Naive thymus-derived CD4-positive, alpha-beta T cell (primary cell): ENCODE measurements at regions of chr6 and their contacts with region 1.

Region 1: DNA sequence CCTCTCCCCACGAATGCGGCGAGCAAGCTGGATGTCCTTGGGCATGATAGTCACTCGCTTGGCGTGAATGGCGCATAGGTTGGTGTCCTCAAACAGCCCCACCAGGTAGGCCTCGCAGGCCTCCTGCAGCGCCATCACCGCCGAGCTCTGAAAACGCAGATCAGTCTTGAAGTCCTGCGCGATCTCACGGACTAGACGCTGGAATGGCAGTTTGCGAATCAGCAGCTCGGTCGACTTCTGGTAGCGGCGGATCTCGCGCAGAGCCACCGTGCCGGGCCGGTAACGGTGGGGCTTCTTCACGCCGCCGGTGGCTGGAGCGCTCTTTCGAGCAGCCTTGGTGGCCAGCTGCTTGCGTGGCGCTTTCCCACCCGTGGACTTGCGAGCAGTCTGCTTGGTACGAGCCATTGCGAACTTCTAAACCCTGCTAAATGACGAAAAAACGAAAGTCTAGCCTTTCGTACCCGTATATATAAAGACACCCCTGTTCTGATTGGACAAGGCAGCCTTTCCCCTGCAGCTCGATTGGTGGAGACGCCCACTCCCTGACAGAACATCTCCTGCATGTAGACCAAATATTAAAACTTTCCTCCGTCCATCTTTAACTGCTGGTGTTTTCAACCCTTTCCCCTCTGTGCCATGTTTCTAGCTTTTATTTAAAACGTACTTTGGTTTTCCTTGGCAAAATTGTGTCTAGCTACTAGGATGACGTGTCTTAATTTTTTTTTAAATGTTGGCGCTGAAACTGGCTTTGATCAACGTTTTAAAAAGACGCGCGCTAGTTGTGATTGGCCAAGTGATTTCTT is 109.8 kb downstream of the HFE start:
- DNase-seq: peak; percentile 55 to 95 (median 93)
- ATAC-seq: peak; percentile 73
- H3K4me3 ChIP-seq: peak overlapping the region; percentile 92
- H3K4me3 Mint-ChIP-seq: peak overlapping the region; percentile 85 to 99 (median 96)
- H3K27ac ChIP-seq: peak overlapping the region; percentile 91
- H3K27ac Mint-ChIP-seq: peak overlapping the region; percentile 96 to 100 (median 98)
- H3K4me1 ChIP-seq: peaks cover 10 to 12% of the 10 kb centered on the region in 2 donors
- H3K4me1 Mint-ChIP-seq: peaks cover 23 to 65% (median 42%) of the 10 kb centered on the region in 7 donors
- H3K27me3 ChIP-seq: no peaks in the 10 kb centered on the region
- H3K27me3 Mint-ChIP-seq: peaks cover 0 to 12% (median 0%) of the 10 kb centered on the region in 5 donors

Region 2: DNA sequence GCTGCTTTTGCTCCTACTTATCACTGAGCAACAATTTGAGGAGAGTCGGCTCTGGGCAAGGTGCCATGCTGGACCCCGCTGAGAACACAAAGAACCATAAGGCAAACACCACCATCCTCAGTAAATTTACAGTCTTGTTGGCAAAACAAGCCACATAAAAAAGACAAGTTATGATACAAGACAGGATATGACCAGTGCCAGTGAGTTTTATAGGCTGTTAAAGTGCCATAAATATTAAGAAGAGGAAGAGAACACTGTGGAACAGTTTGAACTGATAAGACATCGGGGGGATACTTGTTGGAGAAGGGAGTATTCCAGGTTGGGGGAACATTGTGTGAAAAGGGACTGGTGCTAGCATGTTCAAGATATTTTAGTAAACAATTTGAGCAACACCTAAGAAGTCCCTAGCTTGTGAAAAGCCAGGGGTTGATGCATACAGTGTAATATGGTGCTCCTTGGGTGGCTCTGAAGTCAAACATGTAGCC is 1236.0 kb before region 1 on chr6:
- CTCF ChIA-PET with region 1: no interaction called
- POLR2A ChIA-PET with region 1: no interaction called
- intact Hi-C with region 1: no loop called
- DNase-seq: peak in 6 of 9 donors; percentile 46 to 70 (median 60)
- ATAC-seq: peak; percentile 80
- H3K4me3 ChIP-seq: peak overlapping the region; percentile 14
- H3K4me3 Mint-ChIP-seq: peak overlapping the region; percentile 46 to 81 (median 72)
- H3K27ac ChIP-seq: peak overlapping the region; percentile 64
- H3K27ac Mint-ChIP-seq: peak overlapping the region; percentile 44 to 97 (median 93)
- H3K4me1 ChIP-seq: peaks cover 70 to 74% of the 10 kb centered on the region in 2 donors
- H3K4me1 Mint-ChIP-seq: peaks cover 59 to 100% (median 90%) of the 10 kb centered on the region in 7 donors
- H3K27me3 ChIP-seq: no peaks in the 10 kb centered on the region
- H3K27me3 Mint-ChIP-seq: no peaks in the 10 kb centered on the region

Region 3: DNA sequence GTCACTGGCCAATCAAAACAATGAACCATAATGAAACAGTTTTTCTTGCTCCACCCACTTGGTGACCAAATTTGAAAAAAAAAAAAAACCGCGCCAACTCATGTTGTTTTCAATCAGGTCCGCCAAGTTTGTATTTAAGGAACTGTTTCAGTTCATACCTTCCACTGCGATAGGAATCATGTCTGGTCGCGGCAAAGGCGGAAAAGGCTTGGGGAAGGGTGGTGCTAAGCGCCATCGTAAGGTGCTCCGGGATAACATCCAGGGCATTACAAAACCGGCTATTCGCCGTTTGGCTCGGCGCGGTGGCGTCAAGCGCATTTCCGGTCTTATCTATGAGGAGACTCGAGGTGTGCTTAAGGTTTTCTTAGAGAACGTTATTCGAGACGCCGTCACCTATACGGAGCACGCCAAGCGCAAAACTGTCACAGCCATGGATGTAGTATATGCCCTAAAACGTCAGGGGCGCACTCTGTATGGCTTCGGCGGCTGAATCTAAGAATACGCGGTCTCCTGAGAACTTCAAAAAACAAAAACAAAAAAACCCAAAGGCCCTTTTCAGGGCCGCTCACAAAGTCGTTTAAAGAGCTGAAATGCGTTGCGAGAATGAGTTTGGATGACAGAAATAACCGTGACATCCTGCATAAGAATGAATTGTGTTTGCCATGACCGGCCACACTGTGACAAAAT is 93.1 kb before region 1 on chr6:
- CTCF ChIA-PET with region 1: interaction called, 3 read pairs
- POLR2A ChIA-PET with region 1: interaction called, 77 read pairs
- intact Hi-C with region 1: loop called in 1 of 2 experiments (anchors 1 kb)
- DNase-seq: peak; percentile 83 to 96 (median 95)
- ATAC-seq: peak; percentile 94
- H3K4me3 ChIP-seq: peak overlapping the region; percentile 40
- H3K4me3 Mint-ChIP-seq: peak overlapping the region; percentile 81 to 97 (median 89)
- H3K27ac ChIP-seq: peak overlapping the region; percentile 75
- H3K27ac Mint-ChIP-seq: peak overlapping the region; percentile 96 to 100 (median 98)
- H3K4me1 ChIP-seq: peaks cover 4 to 12% of the 10 kb centered on the region in 2 donors
- H3K4me1 Mint-ChIP-seq: peaks cover 7 to 25% (median 22%) of the 10 kb centered on the region in 7 donors
- H3K27me3 ChIP-seq: no peaks in the 10 kb centered on the region
- H3K27me3 Mint-ChIP-seq: peaks cover 0 to 3% (median 0%) of the 10 kb centered on the region in 5 donors

Region 4: DNA sequence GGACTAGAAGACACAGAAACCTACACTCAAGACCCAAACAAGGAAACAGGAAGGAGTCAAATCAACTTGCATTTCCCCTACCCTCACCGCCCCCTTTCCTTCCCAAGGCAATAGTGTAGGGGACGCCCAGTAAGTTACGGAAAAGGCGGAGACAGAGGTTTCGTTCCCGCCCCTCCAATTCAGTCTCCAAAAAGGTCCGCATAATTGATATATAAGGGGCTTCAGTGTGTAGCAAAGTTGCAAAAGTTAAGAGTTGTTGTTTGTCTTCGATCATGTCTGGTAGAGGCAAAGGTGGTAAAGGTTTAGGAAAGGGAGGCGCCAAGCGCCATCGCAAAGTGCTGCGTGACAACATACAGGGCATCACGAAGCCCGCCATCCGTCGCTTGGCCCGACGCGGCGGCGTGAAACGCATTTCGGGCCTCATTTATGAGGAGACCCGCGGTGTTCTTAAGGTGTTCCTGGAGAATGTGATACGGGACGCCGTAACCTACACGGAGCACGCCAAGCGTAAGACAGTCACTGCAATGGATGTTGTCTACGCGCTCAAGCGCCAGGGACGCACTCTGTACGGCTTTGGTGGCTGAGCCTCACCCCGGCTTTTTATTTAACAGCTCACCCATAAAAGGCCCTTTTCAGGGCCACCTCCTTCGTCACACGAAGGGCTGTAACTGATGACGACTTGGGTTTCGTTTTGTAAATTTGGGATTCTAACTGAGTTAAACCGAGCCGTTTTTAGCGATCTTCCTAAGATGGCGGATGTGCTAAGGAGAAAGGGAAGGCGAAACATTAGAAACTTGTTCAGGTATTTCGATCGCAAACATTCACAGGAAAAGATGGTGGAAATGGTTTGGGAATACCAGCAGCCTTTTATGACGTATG is 43.3 kb after region 1 on chr6:
- CTCF ChIA-PET with region 1: interaction called, 12 read pairs
- POLR2A ChIA-PET with region 1: interaction called, 2,165 read pairs
- intact Hi-C with region 1: no loop called
- DNase-seq: peak; percentile 56 to 90 (median 78)
- ATAC-seq: peak; percentile 87
- H3K4me3 ChIP-seq: peak overlapping the region; percentile 55
- H3K4me3 Mint-ChIP-seq: peak overlapping the region; percentile 80 to 93 (median 89)
- H3K27ac ChIP-seq: peak overlapping the region; percentile 83
- H3K27ac Mint-ChIP-seq: peak overlapping the region; percentile 89 to 99 (median 96)
- H3K4me1 ChIP-seq: peaks cover 6 to 11% of the 10 kb centered on the region in 2 donors
- H3K4me1 Mint-ChIP-seq: peaks cover 8 to 37% (median 25%) of the 10 kb centered on the region in 7 donors
- H3K27me3 ChIP-seq: no peaks in the 10 kb centered on the region
- H3K27me3 Mint-ChIP-seq: no peaks in the 10 kb centered on the region

Region 5: GRCh38 chr6:26322645-26323482 is 125.8 kb after region 1 on chr6:
- CTCF ChIA-PET with region 1: no interaction called
- POLR2A ChIA-PET with region 1: interaction called, 11 read pairs
- intact Hi-C with region 1: no loop called
- DNase-seq: peak in 8 of 9 donors; percentile 67 to 85 (median 79)
- ATAC-seq: peak; percentile 72
- H3K4me3 ChIP-seq: peak overlapping the region; percentile 82
- H3K4me3 Mint-ChIP-seq: peak overlapping the region; percentile 64 to 92 (median 88)
- H3K27ac ChIP-seq: peak overlapping the region; percentile 60
- H3K27ac Mint-ChIP-seq: peak overlapping the region; percentile 44 to 93 (median 89)
- H3K4me1 ChIP-seq: peaks cover 5 to 8% of the 10 kb centered on the region in 2 donors
- H3K4me1 Mint-ChIP-seq: peaks cover 2 to 58% (median 36%) of the 10 kb centered on the region in 7 donors
- H3K27me3 ChIP-seq: no peaks in the 10 kb centered on the region
- H3K27me3 Mint-ChIP-seq: peaks cover 5 to 21% (median 17%) of the 10 kb centered on the region in 5 donors

Region 6: DNA sequence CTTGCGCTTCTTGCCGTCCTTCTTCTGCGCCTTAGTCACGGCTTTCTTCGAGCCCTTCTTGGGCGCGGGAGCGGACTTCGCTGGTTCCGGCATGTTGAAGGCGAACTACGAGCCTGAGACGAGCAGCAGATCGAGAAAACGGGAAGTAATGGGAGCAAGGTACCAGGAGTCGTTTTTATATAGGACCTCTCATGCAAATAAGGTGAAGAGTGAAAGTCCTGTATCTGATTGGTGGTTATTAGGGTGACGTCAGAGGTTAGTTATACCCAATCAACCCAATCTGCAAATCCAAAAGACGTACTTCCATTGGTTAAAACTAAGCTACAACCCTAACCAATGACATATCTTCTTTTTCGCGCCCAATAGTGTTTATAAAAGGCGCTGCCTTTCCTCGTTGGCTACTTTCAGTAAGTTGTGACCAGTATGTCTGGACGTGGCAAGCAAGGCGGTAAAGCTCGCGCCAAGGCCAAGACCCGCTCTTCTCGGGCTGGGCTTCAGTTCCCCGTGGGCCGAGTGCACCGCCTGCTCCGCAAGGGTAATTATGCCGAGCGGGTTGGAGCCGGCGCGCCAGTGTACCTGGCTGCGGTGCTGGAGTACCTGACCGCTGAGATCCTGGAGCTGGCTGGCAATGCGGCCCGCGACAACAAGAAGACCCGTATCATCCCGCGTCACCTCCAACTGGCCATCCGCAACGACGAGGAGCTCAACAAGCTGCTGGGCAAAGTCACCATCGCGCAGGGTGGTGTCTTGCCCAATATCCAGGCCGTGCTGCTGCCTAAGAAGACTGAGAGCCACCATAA is 949.9 kb after region 1 on chr6:
- CTCF ChIA-PET with region 1: interaction called, 3 read pairs
- POLR2A ChIA-PET with region 1: interaction called, 86 read pairs
- intact Hi-C with region 1: loop called (anchors 2 kb)
- DNase-seq: peak; percentile 71 to 96 (median 92)
- ATAC-seq: peak; percentile 92
- H3K4me3 ChIP-seq: peak overlapping the region; percentile 90
- H3K4me3 Mint-ChIP-seq: no peak overlapping the region
- H3K27ac ChIP-seq: peak overlapping the region; percentile 89
- H3K27ac Mint-ChIP-seq: no peak overlapping the region
- H3K4me1 ChIP-seq: peaks cover 6 to 7% of the 10 kb centered on the region in 2 donors
- H3K4me1 Mint-ChIP-seq: peaks cover 0 to 26% (median 14%) of the 10 kb centered on the region in 7 donors
- H3K27me3 ChIP-seq: no peaks in the 10 kb centered on the region
- H3K27me3 Mint-ChIP-seq: no peaks in the 10 kb centered on the region

Region 7: GRCh38 chr6:27871924-27872638 is 1675.0 kb after region 1 on chr6:
- CTCF ChIA-PET with region 1: no interaction called
- POLR2A ChIA-PET with region 1: interaction called, 144 read pairs
- intact Hi-C with region 1: loop called in 1 of 2 experiments (anchors 2 kb)
- DNase-seq: peak; percentile 68 to 97 (median 94)
- ATAC-seq: peak; percentile 88
- H3K4me3 ChIP-seq: peak overlapping the region; percentile 69
- H3K4me3 Mint-ChIP-seq: peak overlapping the region; percentile 83 to 99 (median 94)
- H3K27ac ChIP-seq: peak overlapping the region; percentile 84
- H3K27ac Mint-ChIP-seq: peak overlapping the region; percentile 95 to 98 (median 97)
- H3K4me1 ChIP-seq: peaks cover under 1 to 19% of the 10 kb centered on the region in 2 donors
- H3K4me1 Mint-ChIP-seq: peaks cover 15 to 69% (median 42%) of the 10 kb centered on the region in 7 donors
- H3K27me3 ChIP-seq: no peaks in the 10 kb centered on the region
- H3K27me3 Mint-ChIP-seq: peaks cover 0 to 8% (median 0%) of the 10 kb centered on the region in 5 donors